OCI-LY7 (cell line): ENCODE measurements at regions of chr6 and their contacts with region 1.

Region 1: DNA sequence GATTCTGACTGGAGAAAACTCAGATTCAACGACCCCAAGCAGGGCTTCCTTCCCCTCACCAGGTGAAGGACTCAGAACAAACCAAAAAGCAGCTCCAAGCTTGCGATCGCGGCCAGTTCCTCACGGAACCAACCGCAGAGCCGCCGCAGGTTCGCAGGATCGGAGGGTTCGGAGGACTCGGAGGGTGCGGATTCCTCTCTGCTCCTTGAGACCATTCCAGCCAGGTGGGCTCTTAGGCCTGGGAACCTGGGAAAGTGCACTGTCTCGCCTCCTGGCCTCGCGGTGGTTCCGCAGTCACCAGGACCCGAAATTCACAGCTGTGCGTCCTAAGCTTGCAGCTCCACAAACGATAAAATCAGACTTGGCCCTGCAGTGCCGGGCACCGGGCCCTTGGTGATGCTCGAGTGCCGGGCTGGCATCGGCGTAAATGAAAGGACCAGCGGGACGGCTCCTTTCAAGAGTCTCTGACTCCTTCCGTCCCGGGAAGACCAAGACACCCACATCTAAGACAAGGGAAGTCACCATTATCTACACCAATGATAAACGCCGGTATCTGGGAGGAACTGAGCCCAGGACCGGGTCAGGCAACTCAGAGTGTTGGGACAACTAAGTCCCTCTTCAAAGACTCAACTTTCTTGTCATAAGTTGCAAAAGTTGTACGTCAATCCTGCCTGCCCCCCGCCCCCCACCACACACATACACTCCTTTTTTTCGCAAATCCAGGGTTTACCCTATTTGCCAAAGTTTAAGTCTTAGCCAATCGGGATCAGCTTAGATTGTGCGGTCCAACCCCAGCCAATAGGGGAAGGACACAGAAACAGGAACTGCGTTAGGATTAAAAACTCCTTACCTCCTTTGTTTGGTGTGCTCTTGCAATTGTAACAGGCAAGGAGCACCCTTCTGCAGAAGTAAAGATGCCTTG is 69.8 kb upstream of the PRSS16 start:
- DNase-seq: peak; percentile 89
- H3K4me3 ChIP-seq: peak overlapping the region; percentile 95
- H3K27ac ChIP-seq: peak overlapping the region; percentile 81
- H3K4me1 ChIP-seq: peaks cover 8% of the 10 kb centered on the region
- CTCF ChIP-seq: peak; percentile 74

Region 2: GRCh38 chr6:27146706-27147505 is 30.8 kb before region 1 on chr6:
- CTCF ChIA-PET with region 1: no interaction called
- POLR2A ChIA-PET with region 1: interaction called, 16 read pairs
- intact Hi-C with region 1: no loop called
- DNase-seq: peak; percentile 98
- H3K4me3 ChIP-seq: peak overlapping the region; percentile 73
- H3K27ac ChIP-seq: peak overlapping the region; percentile 99
- H3K4me1 ChIP-seq: peaks cover 60% of the 10 kb centered on the region
- CTCF ChIP-seq: no peak

Region 3: DNA sequence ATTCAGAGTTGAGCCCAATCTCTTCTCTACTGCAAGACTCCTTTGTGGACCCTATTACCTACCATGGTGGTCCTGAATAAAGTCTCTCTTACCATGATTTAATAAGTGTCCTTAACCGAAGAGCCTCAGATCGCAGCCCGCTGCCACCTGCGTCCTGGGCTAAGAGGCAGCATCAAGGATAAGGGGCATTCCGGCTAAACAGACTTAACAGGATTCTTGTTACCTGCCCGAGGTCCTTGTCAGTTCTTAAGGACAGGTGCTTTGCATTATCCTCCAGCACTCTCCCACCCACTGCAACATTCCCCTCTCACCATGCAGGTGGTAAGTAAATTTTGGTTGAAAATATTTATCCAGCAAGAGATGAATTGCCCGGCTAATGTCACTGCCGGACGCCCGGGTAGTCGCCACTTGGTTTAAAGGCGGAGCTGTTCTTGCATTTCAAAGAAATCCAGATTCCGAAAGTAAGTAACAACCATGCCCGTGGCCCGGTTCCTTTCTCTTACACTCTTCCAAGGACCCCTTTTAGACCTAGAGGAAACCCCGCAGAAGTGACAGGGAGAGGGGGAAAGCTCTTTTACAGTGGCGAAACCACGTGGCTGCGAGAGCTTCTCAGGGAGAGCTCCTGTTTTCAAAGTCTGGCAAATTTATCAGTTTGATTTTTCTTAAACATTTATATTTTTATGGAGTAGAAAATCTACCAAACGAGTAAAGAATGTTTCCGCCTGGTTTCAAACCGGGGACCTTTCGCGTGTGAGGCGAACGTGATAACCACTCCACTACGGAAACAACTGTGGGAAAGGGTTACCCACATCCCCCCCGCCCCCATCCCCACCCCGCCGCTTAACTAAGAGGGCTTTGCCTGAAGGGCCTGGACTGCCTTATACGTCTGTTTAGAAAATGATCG is 27.9 kb after region 1 on chr6:
- CTCF ChIA-PET with region 1: interaction called, 13 read pairs
- POLR2A ChIA-PET with region 1: no interaction called
- intact Hi-C with region 1: no loop called
- DNase-seq: no peak
- H3K4me3 ChIP-seq: no peak overlapping the region
- H3K27ac ChIP-seq: no peak overlapping the region
- H3K4me1 ChIP-seq: no peaks in the 10 kb centered on the region
- CTCF ChIP-seq: no peak

Region 4: DNA sequence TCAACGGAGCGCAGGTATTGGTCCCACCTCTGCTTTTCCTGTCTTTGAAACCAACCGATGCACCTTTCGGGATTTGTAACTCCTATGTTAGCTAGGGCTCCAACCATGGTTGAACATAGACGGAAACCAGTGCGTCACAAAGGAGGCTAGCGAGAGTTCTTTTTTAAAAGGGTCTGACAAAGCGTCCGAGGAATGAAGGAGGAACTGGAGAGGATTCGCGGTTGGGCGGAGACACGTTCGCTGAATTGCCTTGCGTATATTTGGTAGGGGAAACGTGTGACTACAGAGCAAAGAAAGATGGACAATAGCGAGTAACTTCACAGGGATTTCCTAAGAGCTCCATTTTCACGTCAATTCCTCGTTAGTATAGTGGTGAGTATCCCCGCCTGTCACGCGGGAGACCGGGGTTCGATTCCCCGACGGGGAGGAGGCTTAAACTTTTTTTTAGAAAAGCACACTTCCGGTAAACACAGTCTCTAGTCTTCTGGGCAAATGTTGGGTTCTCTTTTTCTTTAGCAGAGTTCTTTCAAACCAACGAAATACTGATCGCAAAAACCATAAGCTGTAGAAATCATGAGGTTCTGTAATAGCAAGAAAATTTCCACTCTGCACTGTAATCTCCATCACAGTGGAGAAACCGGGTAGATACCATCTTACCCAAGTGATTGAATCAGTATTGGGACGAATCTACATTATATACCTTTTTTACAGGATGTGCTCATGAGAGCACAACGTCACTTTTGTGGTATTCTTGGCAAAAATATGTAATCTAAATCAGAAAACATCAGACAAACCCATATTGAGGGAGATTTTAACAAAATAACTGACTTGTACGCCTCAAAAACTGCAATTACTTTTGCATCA is 301.8 kb after region 1 on chr6:
- CTCF ChIA-PET with region 1: no interaction called
- POLR2A ChIA-PET with region 1: no interaction called
- intact Hi-C with region 1: loop called (anchors 1 kb)
- DNase-seq: peak; percentile 85
- H3K4me3 ChIP-seq: peak overlapping the region; percentile 73
- H3K27ac ChIP-seq: peak overlapping the region; percentile 79
- H3K4me1 ChIP-seq: peaks cover 15% of the 10 kb centered on the region
- CTCF ChIP-seq: no peak

Region 5: GRCh38 chr6:27687154-27688013 is 509.6 kb after region 1 on chr6:
- CTCF ChIA-PET with region 1: no interaction called
- POLR2A ChIA-PET with region 1: interaction called, 4 read pairs
- intact Hi-C with region 1: loop called (anchors 5 kb)
- DNase-seq: peak; percentile 87
- H3K4me3 ChIP-seq: peak overlapping the region; percentile 67
- H3K27ac ChIP-seq: peak overlapping the region; percentile 41
- H3K4me1 ChIP-seq: no peaks in the 10 kb centered on the region
- CTCF ChIP-seq: peak; percentile 83